WTC11 (cell line): ENCODE measurements at regions of chr2 and their contacts with region 1.

Region 1: GRCh38 chr2:206840999-206841398 is 75.6 kb downstream of the FASTKD2 start:
- DNase-seq: no peak
- ATAC-seq: peak; percentile 98
- H3K4me3 Mint-ChIP-seq: no peak overlapping the region
- H3K27ac Mint-ChIP-seq: no peak overlapping the region
- H3K4me1 Mint-ChIP-seq: no peaks in the 10 kb centered on the region
- H3K27me3 Mint-ChIP-seq: no peaks in the 10 kb centered on the region
- CTCF ChIP-seq: no peak

Region 2: GRCh38 chr2:206851521-206851920 is 10.5 kb after region 1 on chr2:
- CTCF ChIA-PET with region 1: interaction called, 11 read pairs
- POLR2A ChIA-PET with region 1: no interaction called
- DNase-seq: no peak
- ATAC-seq: no peak
- H3K4me3 Mint-ChIP-seq: no peak overlapping the region
- H3K27ac Mint-ChIP-seq: no peak overlapping the region
- H3K4me1 Mint-ChIP-seq: peaks cover 3% of the 10 kb centered on the region
- H3K27me3 Mint-ChIP-seq: no peaks in the 10 kb centered on the region
- CTCF ChIP-seq: no peak

Region 3: DNA sequence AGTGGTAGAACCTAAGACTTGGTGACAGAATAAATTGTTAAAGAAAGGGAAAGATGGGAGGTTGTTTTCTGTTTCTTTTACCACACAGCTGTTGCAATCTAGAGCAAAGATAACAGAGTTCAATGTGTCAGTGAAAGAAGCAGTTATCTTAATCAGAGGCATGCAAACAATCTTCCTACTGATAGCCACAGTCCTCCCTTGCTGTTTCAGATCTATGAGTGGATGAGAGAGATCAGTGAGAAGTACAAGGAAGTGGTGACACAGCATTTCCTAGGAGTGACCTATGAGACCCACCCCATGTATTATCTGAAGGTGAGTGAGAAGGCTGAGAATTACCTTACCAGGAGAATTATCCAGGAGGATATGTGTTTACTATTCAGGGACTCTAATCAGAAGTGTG is 114.3 kb after region 1 on chr2:
- CTCF ChIA-PET with region 1: no interaction called
- POLR2A ChIA-PET with region 1: no interaction called
- DNase-seq: no peak
- ATAC-seq: no peak
- H3K4me3 Mint-ChIP-seq: no peak overlapping the region
- H3K27ac Mint-ChIP-seq: no peak overlapping the region
- H3K4me1 Mint-ChIP-seq: no peaks in the 10 kb centered on the region
- H3K27me3 Mint-ChIP-seq: peaks cover 4% of the 10 kb centered on the region
- CTCF ChIP-seq: no peak